Mammary epithelial cell (primary cell): ENCODE measurements at regions of chr18 and their contacts with region 1.

Region 1: GRCh38 chr18:46273829-46274228 is 169.6 kb downstream of the HAUS1 start:
- DNase-seq: no peak
- H3K4me3 ChIP-seq: no peak overlapping the region
- H3K27ac ChIP-seq: no peak overlapping the region
- H3K4me1 ChIP-seq: peaks cover 20% of the 10 kb centered on the region
- H3K27me3 ChIP-seq: no peaks in the 10 kb centered on the region
- CTCF ChIP-seq: no peak

Region 2: DNA sequence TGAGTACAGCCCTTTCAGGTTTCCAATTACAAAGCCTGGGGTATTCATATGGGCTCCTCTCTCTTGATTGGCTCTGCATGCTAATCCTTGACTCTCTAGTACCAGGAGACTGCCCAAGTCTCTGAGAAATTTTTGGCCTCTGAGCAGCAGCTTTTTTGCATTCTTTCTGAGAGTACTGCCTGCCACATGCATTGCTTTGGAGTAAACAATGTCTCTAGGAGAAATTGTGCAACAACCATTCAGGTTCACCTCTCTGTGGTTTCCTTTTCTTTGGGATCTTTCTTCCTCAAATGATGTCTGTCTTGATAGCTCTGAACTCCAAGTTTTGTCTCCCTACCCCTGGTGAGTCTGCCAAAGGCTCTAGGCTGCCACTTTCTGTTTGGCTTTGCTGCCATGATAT is 1708.9 kb before region 1 on chr18:
- CTCF ChIA-PET with region 1: no interaction called
- dilution Hi-C with region 1: no loop called
- in situ Hi-C with region 1: no loop called
- intact Hi-C with region 1: no loop called
- DNase-seq: peak; percentile 81
- H3K4me3 ChIP-seq: no peak overlapping the region
- H3K27ac ChIP-seq: no peak overlapping the region
- H3K4me1 ChIP-seq: peaks cover 28% of the 10 kb centered on the region
- H3K27me3 ChIP-seq: no peaks in the 10 kb centered on the region
- CTCF ChIP-seq: no peak

Region 3: GRCh38 chr18:46167971-46168370 is 105.9 kb before region 1 on chr18:
- CTCF ChIA-PET with region 1: no interaction called
- dilution Hi-C with region 1: loop called (anchors 5 kb)
- in situ Hi-C with region 1: no loop called
- intact Hi-C with region 1: no loop called
- DNase-seq: no peak
- H3K4me3 ChIP-seq: no peak overlapping the region
- H3K27ac ChIP-seq: no peak overlapping the region
- H3K4me1 ChIP-seq: peaks cover 16% of the 10 kb centered on the region
- H3K27me3 ChIP-seq: no peaks in the 10 kb centered on the region
- CTCF ChIP-seq: no peak

Region 4: DNA sequence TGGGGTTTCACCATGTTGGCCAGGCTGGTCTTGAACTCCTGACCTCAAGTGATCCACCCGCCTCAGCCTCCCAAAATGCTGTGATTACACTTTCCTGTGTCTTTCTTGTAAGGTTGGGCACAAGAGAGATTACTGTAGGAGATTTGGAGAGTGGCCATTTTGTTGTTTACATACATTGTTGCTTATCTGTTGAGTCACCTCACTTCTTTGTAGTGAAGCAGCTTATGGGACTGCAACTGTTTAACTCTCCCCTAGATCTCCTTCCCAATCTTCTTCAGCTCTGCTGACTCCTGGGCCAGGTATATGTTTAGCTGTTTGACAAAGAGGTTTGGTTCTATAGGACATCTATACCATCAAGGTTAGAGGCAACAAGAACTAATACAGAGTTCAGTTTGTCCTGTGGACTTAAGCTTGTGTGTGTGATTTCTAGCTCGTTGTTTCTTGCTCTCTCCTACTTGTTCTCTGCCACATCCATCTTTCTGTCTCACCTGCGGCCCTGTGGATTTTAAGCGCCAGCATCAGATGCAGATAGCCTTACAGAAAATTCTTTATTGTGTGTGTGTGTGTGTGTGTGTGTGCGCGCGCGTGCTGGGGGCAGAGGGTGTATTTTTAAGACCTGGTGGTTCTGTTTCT is 74.2 kb before region 1 on chr18:
- CTCF ChIA-PET with region 1: no interaction called
- dilution Hi-C with region 1: loop called (anchors 5 kb)
- in situ Hi-C with region 1: no loop called
- intact Hi-C with region 1: no loop called
- DNase-seq: no peak
- H3K4me3 ChIP-seq: no peak overlapping the region
- H3K27ac ChIP-seq: no peak overlapping the region
- H3K4me1 ChIP-seq: peaks cover 8% of the 10 kb centered on the region
- H3K27me3 ChIP-seq: no peaks in the 10 kb centered on the region
- CTCF ChIP-seq: no peak

Region 5: DNA sequence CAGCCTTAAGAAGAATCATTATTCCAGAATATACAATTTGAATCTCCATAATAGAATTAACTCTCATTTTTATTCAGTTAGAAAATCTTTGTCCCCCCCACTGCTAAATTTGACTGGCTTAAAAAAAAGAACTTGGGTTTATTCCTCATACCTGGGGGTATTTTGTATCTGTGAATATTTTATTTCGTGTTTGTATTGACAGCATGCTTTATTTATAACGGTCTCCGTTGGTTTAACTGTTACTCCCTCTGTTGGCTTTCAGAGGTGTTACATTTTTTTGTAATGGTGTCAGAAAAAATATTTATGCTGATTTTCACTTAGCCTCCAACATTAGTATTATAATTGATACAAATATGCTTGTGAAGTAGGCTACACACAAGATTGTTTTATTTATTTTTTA is 60.5 kb before region 1 on chr18:
- CTCF ChIA-PET with region 1: no interaction called
- dilution Hi-C with region 1: no loop called
- in situ Hi-C with region 1: no loop called
- intact Hi-C with region 1: no loop called
- DNase-seq: no peak
- H3K4me3 ChIP-seq: no peak overlapping the region
- H3K27ac ChIP-seq: no peak overlapping the region
- H3K4me1 ChIP-seq: peaks cover 9% of the 10 kb centered on the region
- H3K27me3 ChIP-seq: no peaks in the 10 kb centered on the region
- CTCF ChIP-seq: peak; percentile 49 to 59

Region 6: DNA sequence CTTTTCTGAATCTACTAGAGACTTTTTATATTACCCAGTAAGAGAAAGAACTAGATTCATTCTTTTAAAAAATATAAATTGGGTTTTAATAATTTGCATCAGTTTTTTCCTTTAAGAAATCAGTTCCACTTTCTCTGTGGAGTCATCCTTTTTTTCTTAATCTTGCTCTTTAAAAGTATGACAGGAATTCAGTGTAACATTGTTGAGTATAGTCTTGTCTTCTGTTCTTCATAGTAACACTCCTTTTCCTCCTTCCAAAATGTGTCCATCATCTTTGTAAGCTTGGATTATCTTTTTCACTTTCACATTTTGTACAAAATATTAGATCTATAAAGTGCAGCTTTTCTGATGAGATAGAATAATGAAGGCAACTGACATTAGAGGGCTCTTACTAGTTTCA is 34.3 kb before region 1 on chr18:
- CTCF ChIA-PET with region 1: no interaction called
- dilution Hi-C with region 1: no loop called
- in situ Hi-C with region 1: no loop called
- intact Hi-C with region 1: no loop called
- DNase-seq: no peak
- H3K4me3 ChIP-seq: no peak overlapping the region
- H3K27ac ChIP-seq: no peak overlapping the region
- H3K4me1 ChIP-seq: peaks cover 15% of the 10 kb centered on the region
- H3K27me3 ChIP-seq: no peaks in the 10 kb centered on the region
- CTCF ChIP-seq: no peak